Endothelial cell of umbilical vein (primary cell): ENCODE measurements at regions of chr17 and their contacts with region 1.

Region 1: DNA sequence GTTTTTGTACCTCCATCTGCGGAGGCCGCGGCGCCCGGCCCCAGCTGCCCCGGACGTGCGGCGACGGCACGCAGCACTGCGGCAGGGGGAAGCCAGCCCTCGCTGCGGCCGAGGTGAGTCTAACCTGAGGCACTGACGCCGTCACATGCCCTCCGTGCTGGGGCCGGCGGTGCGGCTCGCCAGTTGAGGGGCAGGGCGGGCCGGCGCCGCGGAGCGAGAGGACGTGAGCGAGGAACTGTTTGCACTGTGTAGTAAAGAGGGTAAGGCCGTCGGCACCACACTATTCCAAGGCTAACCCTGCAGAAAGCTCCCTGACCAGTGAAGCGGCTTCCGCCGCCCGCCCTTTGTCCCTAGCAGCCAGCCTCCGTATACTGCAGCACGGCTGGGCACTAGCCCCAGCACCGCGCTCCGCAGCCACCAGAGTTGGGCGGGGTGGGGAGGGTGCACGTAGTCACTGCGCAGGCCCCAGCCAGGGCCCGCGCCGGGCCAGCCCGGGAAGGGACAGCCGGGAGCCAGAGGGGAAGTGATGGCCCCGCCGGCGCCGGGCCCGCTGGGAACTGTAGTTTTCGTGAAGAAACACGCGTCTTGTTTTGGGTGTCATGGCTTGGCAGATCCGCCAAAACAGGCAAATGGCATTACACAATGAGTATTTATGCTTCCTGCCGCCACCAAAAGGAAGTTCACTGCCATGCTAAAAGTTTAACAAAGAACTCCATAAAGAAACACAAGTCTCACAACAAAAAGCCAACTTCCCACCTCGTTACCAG is 580 bp upstream of the KANSL1 start:
- DNase-seq: peak; percentile 95
- H3K4me3 ChIP-seq: peak overlapping the region; percentile 33 to 90 (median 64)
- H3K27ac ChIP-seq: peak overlapping the region; percentile 62
- H3K4me1 ChIP-seq: peaks cover 26% of the 10 kb centered on the region
- H3K27me3 ChIP-seq: no peaks in the 10 kb centered on the region
- CTCF ChIP-seq: no peak
- POLR2A ChIP-seq: peak; percentile 84

Region 2: DNA sequence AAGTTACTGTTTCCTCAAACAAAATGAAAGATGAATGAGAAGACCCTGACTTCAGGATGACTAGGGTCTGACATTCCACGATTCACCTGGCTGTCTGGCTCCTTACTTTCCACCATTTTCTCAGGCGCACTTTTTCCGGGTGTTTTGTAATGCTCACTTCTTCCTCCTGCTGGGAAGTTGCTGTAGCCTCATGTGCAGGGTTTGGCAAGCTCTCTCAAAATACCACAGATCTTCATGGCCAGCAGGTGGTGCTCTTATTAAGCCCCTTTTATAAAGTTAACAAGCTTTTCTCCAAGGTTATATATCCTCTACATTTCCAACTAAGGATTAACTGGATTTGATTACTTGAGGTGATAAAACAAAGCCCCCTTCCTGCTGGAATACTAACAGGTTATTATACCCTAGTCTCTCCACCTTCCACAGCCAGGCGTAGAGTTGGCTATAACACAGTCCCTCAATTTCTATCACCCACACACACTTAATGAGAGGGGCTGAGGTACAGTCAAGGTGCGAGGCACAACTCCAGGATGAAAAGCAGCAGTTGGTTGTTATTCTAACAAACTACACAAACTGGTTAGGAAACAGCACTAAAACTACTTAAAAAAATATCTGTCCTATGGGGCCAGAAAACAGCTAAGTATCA is 149.4 kb before region 1 on chr17:
- CTCF ChIA-PET with region 1: interaction called, 72 read pairs
- POLR2A ChIA-PET with region 1: no interaction called
- dilution Hi-C with region 1: no loop called
- intact Hi-C with region 1: loop called (anchors 1 kb)
- DNase-seq: peak; percentile 93
- H3K4me3 ChIP-seq: no peak overlapping the region
- H3K27ac ChIP-seq: no peak overlapping the region
- H3K4me1 ChIP-seq: peaks cover 9% of the 10 kb centered on the region
- H3K27me3 ChIP-seq: no peaks in the 10 kb centered on the region
- CTCF ChIP-seq: peak; percentile 79 to 83
- POLR2A ChIP-seq: no peak

Region 3: GRCh38 chr17:46097497-46097896 is 96.3 kb before region 1 on chr17:
- CTCF ChIA-PET with region 1: interaction called, 28 read pairs
- POLR2A ChIA-PET with region 1: no interaction called
- dilution Hi-C with region 1: no loop called
- intact Hi-C with region 1: no loop called
- DNase-seq: no peak
- H3K4me3 ChIP-seq: no peak overlapping the region
- H3K27ac ChIP-seq: no peak overlapping the region
- H3K4me1 ChIP-seq: peaks cover 24% of the 10 kb centered on the region
- H3K27me3 ChIP-seq: no peaks in the 10 kb centered on the region
- CTCF ChIP-seq: no peak
- POLR2A ChIP-seq: no peak

Region 4: GRCh38 chr17:46139432-46140210 is 54.2 kb before region 1 on chr17:
- CTCF ChIA-PET with region 1: interaction called, 11 read pairs
- POLR2A ChIA-PET with region 1: no interaction called
- dilution Hi-C with region 1: no loop called
- intact Hi-C with region 1: no loop called
- DNase-seq: no peak
- H3K4me3 ChIP-seq: no peak overlapping the region
- H3K27ac ChIP-seq: no peak overlapping the region
- H3K4me1 ChIP-seq: peaks cover 7% of the 10 kb centered on the region
- H3K27me3 ChIP-seq: no peaks in the 10 kb centered on the region
- CTCF ChIP-seq: no peak
- POLR2A ChIP-seq: no peak

Region 5: GRCh38 chr17:46167826-46168569 is 25.8 kb before region 1 on chr17:
- CTCF ChIA-PET with region 1: interaction called, 11 read pairs
- POLR2A ChIA-PET with region 1: no interaction called
- dilution Hi-C with region 1: no loop called
- intact Hi-C with region 1: no loop called
- DNase-seq: no peak
- H3K4me3 ChIP-seq: no peak overlapping the region
- H3K27ac ChIP-seq: no peak overlapping the region
- H3K4me1 ChIP-seq: peaks cover 17% of the 10 kb centered on the region
- H3K27me3 ChIP-seq: no peaks in the 10 kb centered on the region
- CTCF ChIP-seq: no peak
- POLR2A ChIP-seq: no peak